Activated CD4-positive, alpha-beta T cell treated with anti-CD3 and anti-CD28 coated beads, Interleukin-2, amount 10 ng/mL, durations not matched to agents 24 days and 14 days (primary cell): ENCODE measurements at regions of chr10 and their contacts with region 1.

Region 1: GRCh38 chr10:30722956-30723620 is 93.5 kb upstream of the LYZL2 start:
- DNase-seq: no peak
- H3K4me3 Mint-ChIP-seq: no peak overlapping the region
- H3K27ac Mint-ChIP-seq: no peak overlapping the region
- H3K4me1 Mint-ChIP-seq: peaks cover 11% of the 10 kb centered on the region
- H3K27me3 Mint-ChIP-seq: peaks cover 3% of the 10 kb centered on the region

Region 2: GRCh38 chr10:30671026-30671616 is 52.0 kb before region 1 on chr10:
- intact Hi-C with region 1: loop called (anchors 1 kb)
- DNase-seq: peak; percentile 84
- H3K4me3 Mint-ChIP-seq: peak overlapping the region; percentile 63
- H3K27ac Mint-ChIP-seq: no peak overlapping the region
- H3K4me1 Mint-ChIP-seq: peaks cover 13% of the 10 kb centered on the region
- H3K27me3 Mint-ChIP-seq: peaks cover 18% of the 10 kb centered on the region

Region 3: GRCh38 chr10:30687698-30688219 is 35.3 kb before region 1 on chr10:
- intact Hi-C with region 1: loop called (anchors 1 kb)
- DNase-seq: peak; percentile 94
- H3K4me3 Mint-ChIP-seq: no peak overlapping the region
- H3K27ac Mint-ChIP-seq: peak overlapping the region; percentile 18
- H3K4me1 Mint-ChIP-seq: peaks cover 49% of the 10 kb centered on the region
- H3K27me3 Mint-ChIP-seq: peaks cover 3% of the 10 kb centered on the region

Region 4: DNA sequence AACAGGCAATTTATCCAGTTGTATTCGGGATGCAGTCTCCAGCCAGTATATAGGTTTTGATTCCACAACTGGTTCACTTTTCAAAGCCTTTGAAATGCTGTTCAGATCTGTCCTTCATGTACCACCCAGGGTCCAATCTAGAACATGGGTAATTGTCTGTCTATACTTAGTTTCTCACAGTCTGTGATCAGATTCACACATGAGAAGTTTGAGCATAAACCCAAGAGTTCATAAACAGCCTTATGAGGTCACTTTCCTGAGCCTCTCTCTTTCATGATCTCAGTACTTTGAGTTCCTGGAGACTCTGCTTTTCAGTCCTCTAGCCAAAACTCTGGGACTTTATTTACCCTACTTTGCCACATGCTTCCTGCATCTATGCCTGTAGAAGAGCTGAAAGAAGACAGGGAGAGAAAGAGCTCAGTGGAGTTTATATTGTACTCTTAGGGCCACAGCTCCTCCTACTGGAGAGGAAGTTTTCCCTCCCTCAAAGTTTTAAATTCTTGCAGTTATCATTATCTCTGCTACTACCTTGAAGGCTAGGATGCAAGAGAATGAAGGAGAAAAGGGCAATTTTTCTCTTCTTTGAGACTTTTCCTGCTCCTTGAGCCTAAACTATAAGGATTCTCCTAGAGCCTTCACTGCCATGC is 767.9 kb after region 1 on chr10:
- intact Hi-C with region 1: loop called (anchors 5 kb)
- DNase-seq: peak; percentile 78
- H3K4me3 Mint-ChIP-seq: no peak overlapping the region
- H3K27ac Mint-ChIP-seq: peak overlapping the region; percentile 65
- H3K4me1 Mint-ChIP-seq: peaks cover 5% of the 10 kb centered on the region
- H3K27me3 Mint-ChIP-seq: no peaks in the 10 kb centered on the region

Region 5: DNA sequence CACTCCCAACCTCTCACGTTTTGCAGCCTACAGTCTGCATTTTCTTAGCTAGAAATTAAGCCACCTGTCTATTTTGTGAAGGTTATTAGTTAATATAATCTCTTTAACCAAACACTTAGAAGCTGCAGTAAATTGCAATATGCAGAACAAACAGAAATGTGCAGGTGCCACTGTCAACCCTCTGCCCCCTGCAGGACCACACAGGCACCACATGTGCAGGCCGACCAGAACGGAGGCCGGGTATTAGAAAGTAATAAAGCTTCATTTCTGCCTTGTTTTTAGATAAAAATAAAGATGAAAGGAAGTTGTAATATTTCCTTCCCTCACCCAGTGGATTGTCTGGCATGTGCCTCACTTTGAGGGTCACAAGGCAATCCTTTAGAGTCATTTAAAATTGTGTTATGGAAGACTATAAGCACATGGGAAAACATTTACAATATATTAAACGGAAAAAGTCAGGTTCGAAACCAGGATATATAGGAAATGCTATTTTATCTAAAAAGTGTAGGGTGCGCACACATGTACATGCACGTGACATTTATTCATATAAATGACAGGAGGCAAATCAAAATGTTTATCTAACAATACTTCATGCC is 1047.3 kb after region 1 on chr10:
- intact Hi-C with region 1: loop called (anchors 1 kb)
- DNase-seq: peak; percentile 85
- H3K4me3 Mint-ChIP-seq: no peak overlapping the region
- H3K27ac Mint-ChIP-seq: no peak overlapping the region
- H3K4me1 Mint-ChIP-seq: no peaks in the 10 kb centered on the region
- H3K27me3 Mint-ChIP-seq: no peaks in the 10 kb centered on the region

Region 6: GRCh38 chr10:31808258-31809218 is 1085.5 kb after region 1 on chr10:
- intact Hi-C with region 1: loop called (anchors 1 kb)
- DNase-seq: peak; percentile 71
- H3K4me3 Mint-ChIP-seq: peak overlapping the region; percentile 72
- H3K27ac Mint-ChIP-seq: peak overlapping the region; percentile 81
- H3K4me1 Mint-ChIP-seq: peaks cover 6% of the 10 kb centered on the region
- H3K27me3 Mint-ChIP-seq: no peaks in the 10 kb centered on the region